Dorsolateral prefrontal cortex (tissue), 120 donors: ENCODE measurements at regions of chr6 and their contacts with region 1.

Region 1: GRCh38 chr6:57048577-57048976 is 2.1 kb downstream of the KIAA1586 start:
- DNase-seq: no peak
- H3K4me3 ChIP-seq: peak overlapping the region in 44 of 59 donors; percentile 0 to 53 (median 34)
- H3K27ac ChIP-seq: no peak overlapping the region
- H3K27me3 ChIP-seq: no peaks in the 10 kb centered on the region
- CTCF ChIP-seq: no peak

Region 2: DNA sequence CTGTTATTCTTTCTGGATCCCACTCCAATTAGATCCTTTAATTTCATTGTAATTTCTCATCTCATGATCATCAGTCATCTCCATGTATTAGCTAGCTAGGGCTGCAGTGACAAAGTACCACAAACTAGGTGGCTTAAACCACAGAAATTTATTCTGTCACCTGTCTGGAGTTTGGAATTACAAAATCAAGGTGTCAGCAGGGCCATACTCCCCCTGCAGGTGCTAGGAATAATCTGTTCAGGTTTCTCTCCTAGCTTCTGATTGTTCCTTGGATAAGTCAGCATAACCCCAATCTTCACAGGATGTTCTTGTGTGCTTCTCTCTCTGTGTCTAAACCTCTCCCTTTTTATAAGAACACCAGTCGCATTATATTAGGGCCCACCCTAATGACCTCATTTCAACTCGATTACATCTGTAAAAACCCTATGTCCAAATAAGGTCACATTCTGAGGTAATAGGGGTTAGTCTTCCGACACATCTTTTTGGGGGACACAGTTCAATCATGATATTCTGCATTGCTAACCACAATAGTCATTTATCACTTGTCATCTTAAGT is 53.2 kb before region 1 on chr6:
- intact Hi-C with region 1: no loop called
- DNase-seq: no peak
- H3K4me3 ChIP-seq: no peak overlapping the region
- H3K27ac ChIP-seq: no peak overlapping the region
- H3K27me3 ChIP-seq: no peaks in the 10 kb centered on the region
- CTCF ChIP-seq: no peak

Region 3: GRCh38 chr6:57089687-57090460 is 41.3 kb after region 1 on chr6 and contains the start of gene ZNF451:
- intact Hi-C with region 1: loop called (anchors 5 kb)
- DNase-seq: peak; percentile 96 to 99 (median 98)
- H3K4me3 ChIP-seq: peak within 1 kb of the TSS; percentile 40 to 83 (median 71)
- H3K27ac ChIP-seq: peak within 1 kb of the TSS in 58 of 59 donors; percentile 19 to 94 (median 82)
- H3K27me3 ChIP-seq: no peaks in the 10 kb centered on the region
- CTCF ChIP-seq: peak in 41 of 56 donors; percentile 9 to 65 (median 32)
- total RNA-seq, gene ZNF451: 70.0 to 124 (median 97.6) TPM